Transverse colon (tissue), 4 donors: ENCODE measurements at regions of chr10 and their contacts with region 1.

Region 1: DNA sequence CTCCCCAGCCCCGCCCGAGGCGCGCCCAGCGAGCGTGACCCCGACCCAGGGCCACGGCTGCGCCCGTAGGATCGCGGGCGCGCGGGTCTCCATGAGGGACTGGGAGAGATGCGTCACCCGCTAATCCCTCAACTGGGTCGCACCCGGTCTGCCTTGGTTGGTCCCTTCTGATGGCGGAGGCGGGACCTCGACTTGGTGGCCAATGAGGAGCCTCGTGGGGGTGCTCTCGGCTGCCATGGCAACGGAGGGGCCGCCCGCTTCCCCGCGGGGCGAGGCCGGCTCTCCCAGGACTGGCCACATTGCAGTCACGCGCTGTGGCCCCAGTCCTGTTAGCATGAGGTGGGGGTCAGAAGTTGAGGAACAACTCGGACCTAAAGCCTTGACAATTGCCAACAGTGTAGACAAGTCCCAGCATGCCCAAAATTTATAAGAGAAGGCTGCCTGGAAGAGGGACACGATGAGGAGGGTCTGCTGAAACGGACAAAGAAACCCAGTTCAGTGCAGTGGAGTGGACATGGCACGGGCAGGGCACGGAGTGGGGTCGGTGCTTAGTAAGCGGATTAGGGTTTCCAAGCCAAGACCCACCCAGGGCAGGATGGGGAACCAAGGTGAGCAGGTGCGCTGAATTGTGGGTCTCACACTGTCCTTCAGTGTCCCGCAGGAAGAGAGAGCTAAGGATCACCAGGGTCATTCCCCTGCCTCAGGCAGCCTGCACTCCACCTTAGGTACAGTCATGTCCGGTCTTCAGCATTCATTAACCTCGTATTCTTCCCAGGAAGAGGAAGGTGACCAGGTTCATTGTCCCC is 24.4 kb downstream of the DDIT4 start:
- DNase-seq: peak; percentile 98
- H3K4me3 ChIP-seq: peak overlapping the region; percentile 49 to 75 (median 58)
- H3K27ac ChIP-seq: peak overlapping the region; percentile 87 to 96 (median 90)
- H3K4me1 ChIP-seq: peaks cover 7 to 22% (median 13%) of the 10 kb centered on the region in 4 donors
- H3K27me3 ChIP-seq: no peaks in the 10 kb centered on the region
- CTCF ChIP-seq: peak in 1 of 5 experiments; percentile 24
- EP300 ChIP-seq: no peak
- POLR2A ChIP-seq: peak; percentile 83

Region 2: GRCh38 chr10:72315611-72316385 is 17.6 kb after region 1 on chr10:
- in situ Hi-C with region 1: no loop called
- intact Hi-C with region 1: loop called (anchors 1 kb)
- DNase-seq: peak; percentile 69
- H3K4me3 ChIP-seq: no peak overlapping the region
- H3K27ac ChIP-seq: peak overlapping the region; percentile 60 to 84 (median 76)
- H3K4me1 ChIP-seq: peaks cover 37 to 59% (median 49%) of the 10 kb centered on the region in 4 donors
- H3K27me3 ChIP-seq: no peaks in the 10 kb centered on the region
- CTCF ChIP-seq: no peak
- EP300 ChIP-seq: no peak
- POLR2A ChIP-seq: peak; percentile 36